ENCODE measurements at regions of chr15 and their contacts with region 1.

Region 1: DNA sequence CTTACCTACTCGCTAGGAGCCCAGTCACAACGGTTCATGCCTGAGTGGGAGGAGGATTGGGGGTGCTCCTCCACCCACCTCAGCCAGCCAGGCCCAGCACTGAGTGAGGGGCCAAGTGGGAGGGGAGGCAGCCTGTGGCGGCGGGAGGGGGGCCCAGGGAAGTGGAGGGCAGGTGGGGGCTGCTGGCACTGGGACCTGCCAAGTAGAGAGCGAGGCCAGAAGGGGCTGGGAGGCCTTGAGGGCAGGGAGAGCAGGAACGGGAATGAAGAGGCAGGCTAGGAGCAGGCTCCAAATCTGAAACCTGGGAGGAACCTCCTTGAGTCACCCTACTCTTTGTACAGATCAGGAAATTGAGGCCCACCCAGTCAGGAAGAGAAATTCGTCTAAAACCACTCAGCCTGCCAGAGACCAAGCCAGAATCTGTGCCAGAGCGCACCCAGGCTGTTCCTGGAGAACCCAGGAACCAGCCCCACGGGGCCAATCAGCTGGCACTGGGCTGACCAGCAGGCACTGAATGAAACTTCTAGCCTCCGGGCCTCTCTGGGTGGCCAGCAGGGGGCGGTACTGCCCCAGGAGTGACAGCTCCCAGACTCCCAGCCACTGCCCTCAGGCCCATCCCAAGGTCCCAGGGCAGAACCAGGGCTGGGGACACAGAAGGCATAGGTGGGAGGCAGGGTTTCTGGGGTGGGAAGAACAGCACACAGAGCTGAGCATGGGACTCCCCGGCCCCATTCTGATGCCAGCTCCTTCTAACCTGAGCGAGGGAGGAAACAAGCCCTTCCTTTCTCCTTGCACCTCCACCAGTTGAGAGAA is 14.8 kb upstream of the CYP11A1 start:
- DNase-seq: peak; percentile 84
- H3K4me3 Mint-ChIP-seq: no peak overlapping the region
- H3K27ac Mint-ChIP-seq: no peak overlapping the region
- H3K4me1 Mint-ChIP-seq: peaks cover 17% of the 10 kb centered on the region
- H3K27me3 Mint-ChIP-seq: no peaks in the 10 kb centered on the region
- CTCF ChIP-seq: peak; percentile 98

Region 2: DNA sequence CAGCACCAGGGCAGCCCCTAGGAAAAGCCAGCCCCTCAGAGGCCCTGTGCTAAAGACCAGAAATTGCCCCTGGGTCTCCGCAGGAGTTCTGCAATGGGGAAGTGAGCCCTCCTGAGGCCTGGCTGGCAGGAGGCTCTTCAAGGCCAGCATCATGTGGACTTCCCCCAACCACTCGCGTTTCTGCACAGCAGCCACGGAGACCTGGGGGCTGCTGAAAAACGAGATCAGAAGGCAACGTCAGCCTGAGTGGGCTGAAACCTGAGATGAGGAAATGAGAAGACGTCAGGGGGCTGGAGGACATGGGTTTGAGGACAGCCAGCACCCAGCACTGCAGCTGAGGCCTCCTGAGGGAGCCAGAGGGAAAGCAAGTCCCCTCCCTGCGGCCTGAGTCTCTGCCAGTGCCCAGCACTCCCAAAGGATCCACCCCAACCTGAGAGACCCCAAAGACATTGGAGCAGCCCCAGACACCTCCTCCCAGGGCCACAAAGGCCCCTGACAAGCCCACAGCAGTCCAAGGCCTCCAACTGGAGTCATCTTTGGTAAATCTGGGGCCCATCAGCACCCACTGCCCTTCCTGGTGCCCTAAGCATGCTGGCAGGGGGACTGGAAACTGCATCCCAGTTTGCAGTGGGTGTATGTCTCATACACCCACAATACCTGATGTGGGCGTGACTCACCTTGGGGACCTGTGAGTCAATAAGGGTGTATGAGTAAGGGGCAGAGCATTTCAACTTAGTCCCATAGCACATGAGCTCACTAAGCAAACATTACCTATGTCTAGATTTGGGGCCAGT is 14.4 kb after region 1 on chr15:
- CTCF ChIA-PET with region 1: interaction called, 10 read pairs
- POLR2A ChIA-PET with region 1: interaction called, 4 read pairs
- intact Hi-C with region 1: no loop called
- DNase-seq: peak; percentile 85
- H3K4me3 Mint-ChIP-seq: no peak overlapping the region
- H3K27ac Mint-ChIP-seq: no peak overlapping the region
- H3K4me1 Mint-ChIP-seq: peaks cover 38% of the 10 kb centered on the region
- H3K27me3 Mint-ChIP-seq: no peaks in the 10 kb centered on the region
- CTCF ChIP-seq: no peak

Region 3: GRCh38 chr15:74433592-74434262 is 51.5 kb after region 1 on chr15 and contains the start of gene SEMA7A:
- CTCF ChIA-PET with region 1: interaction called, 112 read pairs
- POLR2A ChIA-PET with region 1: interaction called, 3 read pairs
- intact Hi-C with region 1: loop called (anchors 1 kb)
- DNase-seq: peak; percentile 57
- H3K4me3 Mint-ChIP-seq: peak within 1 kb of the TSS; percentile 60
- H3K27ac Mint-ChIP-seq: peak within 1 kb of the TSS; percentile 24
- H3K4me1 Mint-ChIP-seq: no peaks in the 10 kb centered on the region
- H3K27me3 Mint-ChIP-seq: no peaks in the 10 kb centered on the region
- CTCF ChIP-seq: no peak
- total RNA-seq, gene SEMA7A: 0.81 and 1.6 TPM in 2 replicates

Region 4: GRCh38 chr15:74460871-74461846 is 78.9 kb after region 1 on chr15 and contains the start of gene UBL7:
- CTCF ChIA-PET with region 1: interaction called, 5 read pairs
- POLR2A ChIA-PET with region 1: interaction called, 11 read pairs
- intact Hi-C with region 1: no loop called
- DNase-seq: peak; percentile 97
- H3K4me3 Mint-ChIP-seq: peak within 1 kb of the TSS; percentile 93
- H3K27ac Mint-ChIP-seq: peak within 1 kb of the TSS; percentile 70
- H3K4me1 Mint-ChIP-seq: peaks cover 30% of the 10 kb centered on the region
- H3K27me3 Mint-ChIP-seq: no peaks in the 10 kb centered on the region
- CTCF ChIP-seq: no peak
- total RNA-seq, gene UBL7: 55.5 and 56.4 TPM in 2 replicates